ENCODE measurements at regions of chr11 and their contacts with region 1.

Region 1: GRCh38 chr11:35013514-35014233 is 97.3 kb downstream of the PDHX start:
- DNase-seq: peak in 8 of 9 donors; percentile 8 to 68 (median 40)
- ATAC-seq: peak; percentile 79
- H3K4me3 ChIP-seq: no peak overlapping the region
- H3K4me3 Mint-ChIP-seq: peak overlapping the region; percentile 12 to 80 (median 49)
- H3K27ac ChIP-seq: peak overlapping the region; percentile 49
- H3K27ac Mint-ChIP-seq: peak overlapping the region; percentile 66 to 95 (median 84)
- H3K4me1 ChIP-seq: peaks cover 18 to 25% of the 10 kb centered on the region in 2 donors
- H3K4me1 Mint-ChIP-seq: peaks cover 19 to 40% (median 27%) of the 10 kb centered on the region in 7 donors
- H3K27me3 ChIP-seq: no peaks in the 10 kb centered on the region
- H3K27me3 Mint-ChIP-seq: peaks cover 0 to 40% (median 0%) of the 10 kb centered on the region in 5 donors

Region 2: DNA sequence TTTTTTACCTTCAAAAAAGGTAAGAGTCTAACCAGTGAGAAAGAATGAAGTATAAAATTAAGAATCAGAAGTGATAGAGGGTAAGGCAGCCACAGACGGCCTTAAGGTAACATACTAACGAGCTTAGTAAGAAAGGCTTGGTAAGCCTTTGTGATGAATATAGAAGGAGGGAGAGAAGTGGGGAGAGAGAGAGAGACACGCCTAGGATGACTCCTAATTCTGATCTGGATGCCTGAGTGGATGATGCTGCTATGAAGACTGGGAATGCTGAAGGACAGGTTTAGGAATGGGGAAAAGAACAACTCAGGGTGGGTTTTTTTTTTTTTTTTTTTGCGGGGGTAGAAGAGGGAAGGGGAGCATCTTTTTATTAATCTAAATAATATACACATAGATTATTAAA is 1244.1 kb before region 1 on chr11:
- CTCF ChIA-PET with region 1: no interaction called
- POLR2A ChIA-PET with region 1: no interaction called
- intact Hi-C with region 1: no loop called
- DNase-seq: no peak
- ATAC-seq: no peak
- H3K4me3 ChIP-seq: no peak overlapping the region
- H3K4me3 Mint-ChIP-seq: peak overlapping the region in 1 of 10 donors; percentile 44
- H3K27ac ChIP-seq: no peak overlapping the region
- H3K27ac Mint-ChIP-seq: peak overlapping the region in 5 of 9 donors; percentile 3 to 43 (median 32)
- H3K4me1 ChIP-seq: peaks cover 16 to 17% of the 10 kb centered on the region in 2 donors
- H3K4me1 Mint-ChIP-seq: peaks cover 29 to 50% (median 43%) of the 10 kb centered on the region in 7 donors
- H3K27me3 ChIP-seq: no peaks in the 10 kb centered on the region
- H3K27me3 Mint-ChIP-seq: peaks cover 0 to under 1% (median 0%) of the 10 kb centered on the region in 5 donors

Region 3: DNA sequence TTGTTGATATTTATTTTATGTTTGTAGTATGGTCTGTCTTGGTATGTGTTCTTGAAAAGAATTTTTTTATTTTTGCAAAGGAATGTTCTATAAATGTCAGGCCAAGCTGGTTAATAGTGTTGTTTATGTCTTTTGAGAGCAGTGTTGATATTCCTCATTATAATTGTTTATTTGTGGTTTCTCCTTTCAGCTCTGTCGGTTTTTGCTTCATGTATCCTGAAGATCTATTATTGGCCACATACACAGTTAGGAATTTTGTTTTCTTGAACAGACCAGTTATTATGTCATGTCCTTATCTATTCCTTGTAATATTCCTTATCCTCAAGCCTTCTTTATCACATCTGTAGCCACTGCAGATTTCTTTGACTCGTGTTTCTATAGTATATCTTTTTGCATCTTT is 40.8 kb before region 1 on chr11:
- CTCF ChIA-PET with region 1: no interaction called
- POLR2A ChIA-PET with region 1: no interaction called
- intact Hi-C with region 1: no loop called
- DNase-seq: no peak
- ATAC-seq: no peak
- H3K4me3 ChIP-seq: no peak overlapping the region
- H3K4me3 Mint-ChIP-seq: no peak overlapping the region
- H3K27ac ChIP-seq: no peak overlapping the region
- H3K27ac Mint-ChIP-seq: no peak overlapping the region
- H3K4me1 ChIP-seq: no peaks in the 10 kb centered on the region
- H3K4me1 Mint-ChIP-seq: peaks cover 13 to 43% (median 26%) of the 10 kb centered on the region in 7 donors
- H3K27me3 ChIP-seq: no peaks in the 10 kb centered on the region
- H3K27me3 Mint-ChIP-seq: no peaks in the 10 kb centered on the region

Region 4: GRCh38 chr11:34997952-34998528 is 15.6 kb before region 1 on chr11:
- CTCF ChIA-PET with region 1: interaction called, 8 read pairs
- POLR2A ChIA-PET with region 1: no interaction called
- intact Hi-C with region 1: loop called in 1 of 2 experiments (anchors 1 kb)
- DNase-seq: peak in 6 of 9 donors; percentile 27 to 54 (median 44)
- ATAC-seq: peak; percentile 72
- H3K4me3 ChIP-seq: no peak overlapping the region
- H3K4me3 Mint-ChIP-seq: peak overlapping the region in 9 of 10 donors; percentile 6 to 81 (median 34)
- H3K27ac ChIP-seq: peak overlapping the region; percentile 8
- H3K27ac Mint-ChIP-seq: peak overlapping the region; percentile 15 to 90 (median 69)
- H3K4me1 ChIP-seq: peaks cover 15 to 19% of the 10 kb centered on the region in 2 donors
- H3K4me1 Mint-ChIP-seq: peaks cover 19 to 38% (median 35%) of the 10 kb centered on the region in 7 donors
- H3K27me3 ChIP-seq: no peaks in the 10 kb centered on the region
- H3K27me3 Mint-ChIP-seq: no peaks in the 10 kb centered on the region

Region 5: GRCh38 chr11:35040221-35040942 is 26.7 kb after region 1 on chr11:
- CTCF ChIA-PET with region 1: no interaction called
- POLR2A ChIA-PET with region 1: interaction called, 6 read pairs
- intact Hi-C with region 1: loop called (anchors 1 kb)
- DNase-seq: peak in 8 of 9 donors; percentile 53 to 89 (median 74)
- ATAC-seq: peak; percentile 88
- H3K4me3 ChIP-seq: peak overlapping the region; percentile 60
- H3K4me3 Mint-ChIP-seq: peak overlapping the region; percentile 74 to 94 (median 89)
- H3K27ac ChIP-seq: peak overlapping the region; percentile 86
- H3K27ac Mint-ChIP-seq: peak overlapping the region; percentile 90 to 99 (median 97)
- H3K4me1 ChIP-seq: peaks cover 29 to 45% of the 10 kb centered on the region in 2 donors
- H3K4me1 Mint-ChIP-seq: peaks cover 28 to 77% (median 68%) of the 10 kb centered on the region in 7 donors
- H3K27me3 ChIP-seq: no peaks in the 10 kb centered on the region
- H3K27me3 Mint-ChIP-seq: peaks cover 0 to 29% (median 0%) of the 10 kb centered on the region in 5 donors

Region 6: GRCh38 chr11:35144136-35144741 is 130.6 kb after region 1 on chr11:
- CTCF ChIA-PET with region 1: interaction called, 4 read pairs
- POLR2A ChIA-PET with region 1: interaction called, 3 read pairs
- intact Hi-C with region 1: loop called in 1 of 2 experiments (anchors 1 kb)
- DNase-seq: peak in 8 of 9 donors; percentile 59 to 85 (median 74)
- ATAC-seq: peak; percentile 59
- H3K4me3 ChIP-seq: peak overlapping the region; percentile 97
- H3K4me3 Mint-ChIP-seq: peak overlapping the region; percentile 83 to 99 (median 94)
- H3K27ac ChIP-seq: peak overlapping the region; percentile 88
- H3K27ac Mint-ChIP-seq: peak overlapping the region; percentile 79 to 100 (median 92)
- H3K4me1 ChIP-seq: peaks cover 68 to 74% of the 10 kb centered on the region in 2 donors
- H3K4me1 Mint-ChIP-seq: peaks cover 62 to 83% (median 77%) of the 10 kb centered on the region in 7 donors
- H3K27me3 ChIP-seq: no peaks in the 10 kb centered on the region
- H3K27me3 Mint-ChIP-seq: no peaks in the 10 kb centered on the region

Region 7: GRCh38 chr11:35343033-35343598 is 329.4 kb after region 1 on chr11:
- CTCF ChIA-PET with region 1: no interaction called
- POLR2A ChIA-PET with region 1: no interaction called
- intact Hi-C with region 1: loop called in 1 of 2 experiments (anchors 5 kb)
- DNase-seq: peak in 8 of 9 donors; percentile 19 to 69 (median 54)
- ATAC-seq: peak; percentile 62
- H3K4me3 ChIP-seq: no peak overlapping the region
- H3K4me3 Mint-ChIP-seq: peak overlapping the region; percentile 33 to 82 (median 66)
- H3K27ac ChIP-seq: peak overlapping the region; percentile 2
- H3K27ac Mint-ChIP-seq: peak overlapping the region; percentile 82 to 91 (median 85)
- H3K4me1 ChIP-seq: peaks cover 3 to 43% of the 10 kb centered on the region in 2 donors
- H3K4me1 Mint-ChIP-seq: peaks cover 29 to 80% (median 59%) of the 10 kb centered on the region in 7 donors
- H3K27me3 ChIP-seq: no peaks in the 10 kb centered on the region
- H3K27me3 Mint-ChIP-seq: peaks cover 0 to 2% (median 0%) of the 10 kb centered on the region in 5 donors